ENCODE measurements at regions of chr16 and their contacts with region 1.

Region 1: DNA sequence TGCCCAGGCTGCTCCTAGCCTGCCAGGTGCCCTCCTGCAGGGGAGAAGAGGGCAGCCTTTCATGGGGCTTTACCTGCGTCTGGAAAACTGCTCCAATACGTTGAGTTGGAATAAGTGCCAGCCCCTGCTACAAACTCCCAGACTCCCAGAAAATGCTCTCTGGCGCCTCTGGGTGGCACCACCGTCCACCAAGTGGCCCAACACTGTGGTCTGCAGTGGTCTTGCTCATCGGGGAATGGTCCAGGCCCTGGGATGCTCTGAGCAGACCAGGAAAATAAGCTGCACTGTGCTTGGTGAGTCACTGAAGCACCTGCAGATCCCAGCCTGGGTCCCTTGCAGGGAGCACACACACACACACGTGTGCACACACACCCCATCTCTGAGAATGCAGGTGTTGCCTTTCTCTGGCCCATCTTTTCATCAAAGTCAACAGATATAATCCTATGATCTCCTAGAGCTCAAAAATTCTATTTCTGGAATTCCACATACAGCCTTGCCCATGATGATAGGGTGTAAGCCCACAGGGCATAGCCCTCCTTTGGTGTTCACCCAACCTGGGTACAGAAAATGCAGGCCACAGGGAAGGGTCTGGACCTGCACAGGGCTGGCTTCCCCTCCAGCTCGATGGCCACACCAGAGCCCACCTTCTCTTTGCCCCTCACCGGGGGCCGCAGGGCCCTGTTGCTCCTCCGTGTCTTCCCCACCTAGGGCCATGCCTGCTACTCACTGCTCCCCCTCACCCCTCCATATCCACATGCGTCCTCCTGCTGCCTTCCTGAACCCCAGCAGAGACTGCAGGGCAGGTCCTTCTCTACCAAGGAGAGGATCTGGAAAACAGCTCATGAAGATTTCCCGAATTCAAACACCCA is 20.5 kb downstream of the CDIP1 start:
- DNase-seq: peak in 2 of 3 donors; percentile 25 to 34
- H3K4me3 ChIP-seq: no peak overlapping the region
- H3K27ac ChIP-seq: no peak overlapping the region
- H3K4me1 ChIP-seq: peaks cover 17 to 74% (median 52%) of the 10 kb centered on the region in 4 experiments
- H3K27me3 ChIP-seq: no peaks in the 10 kb centered on the region

Region 2: DNA sequence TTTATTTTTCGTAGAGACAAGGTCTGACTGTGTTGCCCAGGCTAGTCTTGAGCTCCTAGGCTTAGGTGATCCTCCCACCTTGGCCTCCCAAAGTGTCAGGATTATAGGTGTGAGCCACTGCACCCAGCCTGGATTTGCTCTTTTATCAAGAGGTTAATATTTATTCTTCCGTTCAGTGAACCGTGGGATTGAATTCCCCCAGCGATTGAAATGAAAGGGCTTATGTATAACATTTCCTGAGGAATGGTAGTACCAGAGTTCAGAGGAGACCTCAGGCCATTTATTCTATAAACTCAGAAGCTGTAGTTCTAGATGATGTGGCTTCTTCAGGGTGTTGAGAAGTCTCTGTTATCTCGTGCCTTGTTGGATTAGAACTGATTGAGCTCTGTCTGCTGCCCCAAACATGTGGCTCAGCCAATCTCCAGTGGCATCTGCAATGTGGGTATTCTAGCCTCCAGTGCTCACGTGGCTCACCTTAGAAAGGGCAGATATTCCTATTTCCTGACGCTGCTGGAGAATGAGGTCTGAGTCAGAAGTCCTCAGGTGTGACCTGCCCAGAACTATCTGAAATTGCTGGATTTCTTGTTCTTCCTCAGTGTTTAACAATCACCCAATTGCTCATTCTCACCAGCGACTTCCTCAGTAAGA is 19.4 kb before region 1 on chr16:
- CTCF ChIA-PET with region 1: no interaction called
- POLR2A ChIA-PET with region 1: no interaction called
- DNase-seq: no peak
- H3K4me3 ChIP-seq: no peak overlapping the region
- H3K27ac ChIP-seq: no peak overlapping the region
- H3K4me1 ChIP-seq: no peaks in the 10 kb centered on the region
- H3K27me3 ChIP-seq: no peaks in the 10 kb centered on the region

Region 3: DNA sequence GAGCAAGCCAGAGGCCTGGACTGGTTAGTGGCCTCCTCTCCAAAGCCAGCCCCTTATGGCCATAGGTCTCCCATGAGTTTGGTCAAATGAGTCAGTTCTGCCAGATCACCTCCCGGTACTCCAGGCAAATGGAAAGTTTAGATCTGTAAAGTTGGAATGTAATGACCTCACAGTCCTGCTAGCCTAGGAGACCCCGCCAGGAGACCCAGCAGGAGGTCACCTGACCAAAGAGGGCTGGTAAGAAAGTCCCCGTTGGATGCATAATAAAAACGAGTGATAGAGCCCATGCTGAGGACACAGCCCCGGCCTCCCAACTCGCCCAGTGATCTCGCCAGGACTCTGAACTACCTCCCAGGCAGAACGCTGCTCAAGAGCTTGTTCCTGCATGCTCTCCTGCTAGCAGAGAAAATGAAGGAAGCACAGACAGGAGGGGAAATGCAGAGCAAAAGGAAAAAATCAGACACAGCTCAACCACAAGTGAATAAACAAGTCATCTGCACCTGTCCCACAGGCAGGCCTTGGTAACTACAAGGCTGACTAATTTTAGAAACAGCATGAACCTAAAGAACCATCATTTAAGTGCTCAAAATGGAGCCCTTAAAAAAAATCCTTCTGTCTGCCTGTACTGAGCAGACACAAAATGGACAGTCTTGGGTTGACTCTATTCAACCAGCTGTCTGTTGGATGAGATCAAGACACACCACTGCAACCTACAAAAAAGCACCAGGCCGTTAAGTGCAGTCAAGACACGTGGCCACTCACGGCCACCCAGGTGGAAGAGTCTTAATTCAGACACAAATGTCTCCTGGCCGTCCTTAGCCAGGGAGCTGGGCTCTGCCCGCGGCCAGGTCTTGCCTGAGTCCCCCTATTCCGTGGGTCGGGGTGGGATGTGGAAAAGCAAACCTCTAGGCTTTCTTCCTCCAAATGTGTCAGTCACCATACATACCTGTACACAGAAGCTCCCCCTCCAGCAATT is 11.3 kb after region 1 on chr16:
- CTCF ChIA-PET with region 1: interaction called, 11 read pairs
- POLR2A ChIA-PET with region 1: interaction called, 7 read pairs
- DNase-seq: peak in 2 of 3 donors; percentile 55 to 63
- H3K4me3 ChIP-seq: peak overlapping the region in 2 of 7 experiments; percentile 5 to 18
- H3K27ac ChIP-seq: no peak overlapping the region
- H3K4me1 ChIP-seq: peaks cover 3 to 25% (median 18%) of the 10 kb centered on the region in 4 experiments
- H3K27me3 ChIP-seq: no peaks in the 10 kb centered on the region

Region 4: DNA sequence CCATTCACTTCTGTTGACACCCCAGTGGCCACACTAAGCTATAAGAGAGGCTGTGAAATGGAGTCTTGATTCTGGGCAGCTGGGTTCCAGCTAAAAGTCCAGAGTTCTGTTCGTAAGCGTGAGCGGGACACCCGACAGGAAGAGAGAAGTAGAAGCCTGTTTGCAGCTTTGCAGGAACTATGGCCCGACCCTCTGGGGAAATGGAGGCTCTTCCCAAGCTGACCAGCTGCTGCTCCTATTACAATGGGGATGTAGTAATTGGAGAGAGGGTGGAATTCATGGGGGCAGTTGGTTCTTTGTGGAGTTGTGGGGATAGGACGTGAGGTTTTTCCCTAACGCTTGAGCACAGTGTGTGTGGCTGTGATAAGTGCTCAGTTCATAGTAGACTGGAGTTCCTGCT is 68.2 kb after region 1 on chr16:
- CTCF ChIA-PET with region 1: interaction called, 105 read pairs
- POLR2A ChIA-PET with region 1: no interaction called
- DNase-seq: no peak
- H3K4me3 ChIP-seq: no peak overlapping the region
- H3K27ac ChIP-seq: no peak overlapping the region
- H3K4me1 ChIP-seq: peaks cover 0 to 2% (median 0%) of the 10 kb centered on the region in 4 experiments
- H3K27me3 ChIP-seq: peaks cover 0 to 11% (median 0%) of the 10 kb centered on the region in 5 experiments

Measured in common myeloid progenitor, CD34-positive (primary cell).